A673 (cell line): ENCODE measurements at regions of chr11 and their contacts with region 1.

Region 1: DNA sequence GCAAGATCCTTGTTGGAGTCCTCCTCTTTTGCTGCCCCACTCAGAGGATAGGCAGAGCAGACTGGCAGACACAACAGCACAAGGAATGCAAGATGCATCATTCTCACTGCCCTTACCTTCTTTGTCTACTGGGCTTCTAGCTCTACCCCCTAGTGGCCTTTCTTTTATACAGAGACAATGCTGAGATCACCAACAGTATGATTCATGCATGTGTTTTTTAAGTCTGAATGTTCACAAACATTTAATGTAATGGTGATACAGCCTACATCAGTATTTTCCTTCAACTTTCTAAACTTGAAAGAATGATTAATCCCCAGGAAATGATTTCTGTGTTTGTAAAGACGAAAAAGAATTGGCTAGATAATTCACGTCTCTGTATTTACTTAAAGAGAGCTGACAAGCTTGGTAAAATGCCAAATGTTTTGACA is at the start of gene MMP10:
- DNase-seq: peak; percentile 89
- H3K4me3 ChIP-seq: no peak within 1 kb of the TSS
- H3K27ac ChIP-seq: peak within 1 kb of the TSS; percentile 23
- H3K4me1 ChIP-seq: peaks cover 18% of the 10 kb centered on the region
- H3K27me3 ChIP-seq: no peaks in the 10 kb centered on the region
- CTCF ChIP-seq: peak; percentile 73
- total RNA-seq, gene MMP10: 4.0 TPM in 2 replicates

Region 2: DNA sequence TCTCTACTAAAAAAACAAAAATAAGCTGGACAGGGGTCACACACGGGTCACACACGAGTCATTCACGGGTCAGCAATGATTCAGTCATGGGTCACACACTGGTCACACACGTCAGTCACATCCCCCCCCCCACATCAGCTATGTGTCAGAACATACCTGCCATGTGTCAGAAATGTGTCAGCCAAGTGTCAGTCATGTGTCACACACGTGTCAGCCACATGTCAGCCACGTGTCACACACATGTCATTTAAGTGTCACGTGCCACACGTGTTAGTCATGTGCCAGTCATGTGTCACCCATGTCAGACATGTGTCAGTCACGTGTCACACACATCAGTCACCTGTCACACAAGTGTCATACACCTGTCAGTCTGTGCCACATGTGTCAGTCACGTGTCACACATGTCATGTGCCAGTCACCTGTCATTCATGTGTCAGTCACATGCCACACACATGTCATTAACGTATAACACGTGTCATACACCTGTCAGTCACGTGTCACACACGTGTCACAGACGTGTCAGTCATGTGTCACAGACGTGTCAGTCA is 126.7 kb before region 1 on chr11:
- CTCF ChIA-PET with region 1: no interaction called
- POLR2A ChIA-PET with region 1: interaction called, 12 read pairs
- intact Hi-C with region 1: no loop called
- DNase-seq: no peak
- H3K4me3 ChIP-seq: no peak overlapping the region
- H3K27ac ChIP-seq: no peak overlapping the region
- H3K4me1 ChIP-seq: no peaks in the 10 kb centered on the region
- H3K27me3 ChIP-seq: peaks cover 28% of the 10 kb centered on the region
- CTCF ChIP-seq: no peak